Psoas muscle (tissue), 8 donors: ENCODE measurements at regions of chr1 and their contacts with region 1.

Region 1: DNA sequence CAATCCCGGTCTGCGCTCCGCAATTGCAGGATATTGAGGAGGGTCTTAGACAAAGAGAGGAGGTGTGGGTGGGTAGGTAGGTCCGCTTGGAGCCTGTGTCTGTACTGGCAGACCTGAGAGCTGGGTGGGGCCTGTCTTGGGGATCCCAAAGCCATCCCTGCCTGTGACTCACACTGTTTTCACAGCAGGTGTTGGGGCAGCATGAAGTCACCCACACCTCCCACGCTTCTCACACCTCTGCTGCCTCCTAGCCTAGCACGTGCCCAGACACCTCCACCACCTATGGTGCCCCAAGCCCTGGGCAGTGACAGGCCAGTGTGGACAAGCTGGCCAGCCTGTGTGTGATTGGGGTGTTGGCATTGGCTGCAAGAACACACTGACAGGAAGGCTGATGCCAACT is 65.7 kb upstream of the ECE1 start:
- DNase-seq: no peak
- ATAC-seq: no peak
- H3K4me3 ChIP-seq: no peak overlapping the region
- H3K27ac ChIP-seq: no peak overlapping the region
- H3K4me1 ChIP-seq: no peaks in the 10 kb centered on the region
- H3K27me3 ChIP-seq: no peaks in the 10 kb centered on the region
- CTCF ChIP-seq: no peak

Region 2: GRCh38 chr1:21329209-21329844 is 26.6 kb before region 1 on chr1:
- intact Hi-C with region 1: loop called in 1 of 2 experiments (anchors 2 kb)
- DNase-seq: no peak
- ATAC-seq: no peak
- H3K4me3 ChIP-seq: no peak overlapping the region
- H3K27ac ChIP-seq: no peak overlapping the region
- H3K4me1 ChIP-seq: peaks cover 36% of the 10 kb centered on the region
- H3K27me3 ChIP-seq: no peaks in the 10 kb centered on the region
- CTCF ChIP-seq: no peak

Region 3: DNA sequence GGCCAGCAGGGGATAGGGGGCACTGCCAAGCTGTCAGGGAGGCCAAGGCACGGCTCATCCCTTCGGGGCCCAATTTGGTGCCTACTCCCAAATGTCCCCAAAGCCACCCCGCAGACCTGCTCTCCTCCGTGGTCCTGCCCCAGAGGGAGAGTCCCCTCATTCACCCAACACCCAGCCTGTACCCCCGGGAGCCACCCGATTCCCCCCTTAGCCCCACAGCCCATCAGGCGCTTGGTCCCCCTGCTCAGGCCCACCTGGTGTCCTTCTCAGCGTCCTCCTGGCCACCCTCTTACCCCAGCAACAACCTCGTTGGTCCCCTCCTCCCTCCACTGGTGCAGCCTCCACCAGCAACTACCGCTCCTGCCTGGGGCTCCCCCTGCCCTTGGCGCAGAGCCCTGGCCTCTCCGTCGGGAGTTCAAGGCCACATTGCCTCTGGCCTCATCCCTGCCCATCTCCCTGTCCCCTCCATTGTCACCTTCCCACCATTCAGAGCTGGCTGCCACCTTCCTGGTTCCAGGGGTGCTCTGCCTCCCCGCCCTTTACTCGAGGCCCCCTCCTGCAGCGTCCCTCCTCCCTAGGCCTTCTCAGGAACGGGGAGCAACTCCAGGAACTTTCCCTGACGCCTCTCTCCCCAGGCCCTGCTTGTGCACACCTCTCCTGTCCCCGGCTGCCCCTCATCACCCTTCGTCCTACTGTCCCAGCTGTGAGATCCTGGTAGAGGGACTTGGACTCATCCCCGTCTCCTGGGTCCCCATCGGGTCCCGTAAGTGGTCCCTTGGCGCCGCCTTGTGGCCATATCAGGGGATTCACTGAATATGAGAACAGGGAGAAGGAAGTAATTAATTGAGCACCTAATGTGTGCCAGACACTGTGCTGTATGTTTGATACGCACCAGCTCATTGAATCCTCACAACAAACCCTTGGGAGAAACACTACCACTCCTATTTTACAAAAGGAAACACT is 239.3 kb after region 1 on chr1:
- intact Hi-C with region 1: no loop called
- DNase-seq: peak; percentile 45 to 72
- ATAC-seq: no peak
- H3K4me3 ChIP-seq: no peak overlapping the region
- H3K27ac ChIP-seq: no peak overlapping the region
- H3K4me1 ChIP-seq: no peaks in the 10 kb centered on the region
- H3K27me3 ChIP-seq: peaks cover 0 to 43% (median 11%) of the 10 kb centered on the region in 3 donors
- CTCF ChIP-seq: peak; percentile 35